ENCODE measurements at regions of chr1 and their contacts with region 1.

Region 1: GRCh38 chr1:28886731-28887418 is 27.5 kb upstream of the EPB41 start:
- DNase-seq: peak; percentile 59 to 94 (median 84)
- ATAC-seq: peak; percentile 81
- H3K4me3 ChIP-seq: peak overlapping the region; percentile 87 to 94
- H3K27ac ChIP-seq: peak overlapping the region; percentile 72 to 86
- H3K4me1 ChIP-seq: peaks cover 26 to 55% of the 10 kb centered on the region in 2 donors
- H3K27me3 ChIP-seq: no peaks in the 10 kb centered on the region
- CTCF ChIP-seq: no peak

Region 2: DNA sequence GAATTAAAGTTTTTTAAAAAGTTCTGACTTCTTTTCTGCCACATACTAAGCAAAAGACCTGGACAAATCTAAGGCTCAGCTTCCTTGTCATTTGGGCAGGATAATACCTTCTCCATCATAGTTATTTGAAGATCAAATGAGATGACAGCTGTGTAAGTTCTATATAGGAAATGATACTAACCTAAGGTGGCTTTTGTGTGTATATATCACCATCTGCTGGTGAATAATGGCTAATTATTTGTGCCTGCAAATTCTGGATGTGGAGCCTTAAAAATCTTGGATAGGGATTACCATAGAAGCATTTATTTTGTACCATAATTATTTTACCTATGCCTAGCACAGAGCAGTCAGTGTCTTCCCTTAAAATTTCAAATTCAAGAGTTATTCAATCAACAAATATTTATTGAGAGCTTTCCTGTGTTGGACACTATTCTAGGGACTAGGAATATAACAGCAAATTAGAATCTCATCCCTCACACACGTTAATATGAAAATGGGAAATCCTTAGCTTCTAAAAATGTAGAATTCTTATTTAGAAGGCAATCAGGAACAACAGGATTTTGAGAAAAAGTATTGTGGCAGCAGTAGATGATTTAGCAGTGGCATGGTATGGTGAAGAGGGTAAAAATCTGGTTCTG is 147.1 kb after region 1 on chr1:
- intact Hi-C with region 1: loop called in 1 of 2 experiments (anchors 5 kb)
- DNase-seq: peak in 2 of 4 donors; percentile 44 to 49
- ATAC-seq: peak; percentile 77
- H3K4me3 ChIP-seq: no peak overlapping the region
- H3K27ac ChIP-seq: no peak overlapping the region
- H3K4me1 ChIP-seq: no peaks in the 10 kb centered on the region
- H3K27me3 ChIP-seq: no peaks in the 10 kb centered on the region
- CTCF ChIP-seq: peak; percentile 48 to 62

Region 3: DNA sequence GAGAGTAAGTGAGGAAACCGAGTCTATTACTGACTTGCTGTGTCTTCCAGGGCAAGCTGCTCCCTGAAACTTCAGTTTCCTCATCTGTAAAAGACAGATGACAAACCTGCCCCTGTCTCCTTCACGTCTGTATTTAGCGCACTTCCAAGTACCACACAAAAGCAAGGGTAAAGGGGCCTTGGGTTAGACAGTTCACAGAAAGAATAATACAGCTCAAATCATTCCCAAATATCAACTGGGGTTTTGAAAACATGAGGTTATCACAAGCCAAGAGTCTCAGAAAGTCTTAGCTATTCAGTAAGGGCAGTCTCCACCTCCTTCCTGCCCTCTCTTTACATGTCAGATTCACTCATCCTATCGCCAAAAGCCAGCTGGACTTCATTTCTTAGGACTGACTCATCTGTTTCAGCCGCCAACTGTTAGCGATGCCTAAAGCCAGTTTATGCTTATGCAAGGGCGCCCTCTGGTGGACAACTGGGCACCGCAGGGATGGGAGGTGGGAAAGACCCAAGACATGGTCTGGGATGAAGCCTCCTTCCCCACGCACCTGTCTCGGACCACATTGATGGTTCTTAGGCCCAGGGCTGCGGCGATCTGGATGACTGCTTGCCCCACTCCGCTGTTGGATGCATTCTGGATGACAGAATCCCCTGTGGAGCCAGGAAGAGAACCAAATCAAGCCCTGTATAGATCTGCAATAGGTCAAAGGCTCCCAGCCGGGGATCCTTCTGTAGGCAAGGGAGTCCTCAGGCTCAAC is 315.9 kb after region 1 on chr1:
- intact Hi-C with region 1: loop called in 1 of 2 experiments (anchors 10 kb)
- DNase-seq: peak; percentile 93 to 98 (median 95)
- ATAC-seq: peak; percentile 94
- H3K4me3 ChIP-seq: no peak overlapping the region
- H3K27ac ChIP-seq: peak overlapping the region; percentile 71 to 87
- H3K4me1 ChIP-seq: peaks cover 0 to 17% of the 10 kb centered on the region in 2 donors
- H3K27me3 ChIP-seq: no peaks in the 10 kb centered on the region
- CTCF ChIP-seq: peak; percentile 91 to 99

Region 4: GRCh38 chr1:29344336-29344735 is 457.5 kb after region 1 on chr1:
- intact Hi-C with region 1: no loop called
- DNase-seq: no peak
- ATAC-seq: no peak
- H3K4me3 ChIP-seq: no peak overlapping the region
- H3K27ac ChIP-seq: no peak overlapping the region
- H3K4me1 ChIP-seq: no peaks in the 10 kb centered on the region
- H3K27me3 ChIP-seq: peaks cover 0 to 52% of the 10 kb centered on the region in 2 donors
- CTCF ChIP-seq: no peak

Measured in left lung (tissue), 14 donors.